Posterior cingulate gyrus (tissue), 11 donors: ENCODE measurements at regions of chr6 and their contacts with region 1.

Region 1: DNA sequence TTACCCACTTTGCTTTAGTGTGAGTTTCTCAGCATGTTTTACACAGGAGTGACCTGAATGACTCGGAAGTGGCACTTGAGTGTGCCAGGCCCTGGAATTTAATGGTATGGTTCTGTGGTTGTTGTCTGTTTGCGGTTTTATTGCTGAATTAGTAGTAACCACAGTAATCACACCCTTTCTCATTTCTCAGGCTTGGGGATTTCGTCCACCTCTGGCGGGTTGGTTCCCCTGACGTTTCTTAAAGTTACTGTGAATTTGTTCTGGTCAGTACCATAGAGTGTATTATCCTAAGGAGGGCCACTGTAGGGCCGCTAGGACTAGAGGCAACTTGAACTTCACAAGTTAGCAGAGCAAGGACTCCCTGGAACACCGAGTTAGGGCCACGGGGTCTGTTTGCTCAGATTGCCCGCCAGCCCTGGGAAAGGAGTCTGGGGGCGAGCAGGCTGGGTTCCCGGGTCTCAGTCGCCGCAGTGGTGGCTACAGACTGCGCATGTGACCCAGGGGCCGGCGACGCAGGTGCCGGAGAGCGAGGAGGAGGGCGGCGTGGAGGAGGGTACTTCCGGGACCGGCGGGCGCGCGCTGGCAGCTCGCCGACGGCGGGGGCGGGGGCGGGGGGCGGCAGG is 546 bp upstream of the KLHL32 start:
- DNase-seq: no peak

Region 2: DNA sequence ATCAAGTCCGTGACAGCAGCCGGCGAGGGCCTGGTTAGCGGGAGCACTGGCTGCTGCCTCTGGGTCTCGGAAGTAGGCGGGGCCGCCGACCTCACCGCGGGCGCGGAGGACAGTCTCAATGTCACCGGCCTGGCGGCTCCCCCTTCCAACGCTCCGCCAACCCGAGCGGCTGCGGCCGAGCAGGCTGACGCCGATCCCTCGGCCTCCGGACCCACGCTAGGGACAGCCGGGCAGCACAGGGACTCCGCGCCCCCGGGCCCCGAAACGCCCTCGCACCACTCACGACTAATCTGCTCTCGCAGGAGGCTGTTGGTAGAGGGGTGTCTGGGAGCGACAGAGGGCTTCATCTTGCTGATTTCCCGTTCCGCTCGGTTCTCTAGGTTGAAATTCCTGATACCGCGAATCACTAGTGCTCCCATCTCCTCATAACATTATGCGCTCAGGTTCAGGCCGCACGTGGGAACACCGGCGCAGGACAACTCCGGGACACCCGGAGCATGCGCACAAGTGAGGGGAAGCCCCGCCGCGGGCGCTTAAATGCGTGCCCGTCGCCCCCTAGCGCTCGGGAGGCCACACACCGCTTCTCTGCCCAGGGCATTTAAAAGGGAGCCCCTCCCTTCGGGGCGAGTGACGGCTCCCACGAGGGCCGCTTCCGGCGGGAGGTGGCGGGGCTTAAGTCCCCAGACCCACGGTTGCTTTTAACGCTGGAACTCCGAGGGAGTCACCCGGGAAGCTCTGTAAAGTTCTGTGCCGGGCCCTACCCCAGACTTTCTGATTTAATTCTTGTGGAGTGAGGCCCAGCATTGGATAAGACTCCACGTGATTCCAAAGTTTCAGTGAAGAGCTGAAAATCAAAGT is 26.4 kb before region 1 on chr6 and contains the start of gene NDUFAF4:
- intact Hi-C with region 1: loop called (anchors 2 kb)
- DNase-seq: peak; percentile 88 to 99 (median 94)

Region 3: GRCh38 chr6:96990462-96990861 is 66.5 kb after region 1 on chr6:
- intact Hi-C with region 1: loop called (anchors 5 kb)
- DNase-seq: peak in 8 of 10 donors; percentile 37 to 95 (median 59)

Region 4: DNA sequence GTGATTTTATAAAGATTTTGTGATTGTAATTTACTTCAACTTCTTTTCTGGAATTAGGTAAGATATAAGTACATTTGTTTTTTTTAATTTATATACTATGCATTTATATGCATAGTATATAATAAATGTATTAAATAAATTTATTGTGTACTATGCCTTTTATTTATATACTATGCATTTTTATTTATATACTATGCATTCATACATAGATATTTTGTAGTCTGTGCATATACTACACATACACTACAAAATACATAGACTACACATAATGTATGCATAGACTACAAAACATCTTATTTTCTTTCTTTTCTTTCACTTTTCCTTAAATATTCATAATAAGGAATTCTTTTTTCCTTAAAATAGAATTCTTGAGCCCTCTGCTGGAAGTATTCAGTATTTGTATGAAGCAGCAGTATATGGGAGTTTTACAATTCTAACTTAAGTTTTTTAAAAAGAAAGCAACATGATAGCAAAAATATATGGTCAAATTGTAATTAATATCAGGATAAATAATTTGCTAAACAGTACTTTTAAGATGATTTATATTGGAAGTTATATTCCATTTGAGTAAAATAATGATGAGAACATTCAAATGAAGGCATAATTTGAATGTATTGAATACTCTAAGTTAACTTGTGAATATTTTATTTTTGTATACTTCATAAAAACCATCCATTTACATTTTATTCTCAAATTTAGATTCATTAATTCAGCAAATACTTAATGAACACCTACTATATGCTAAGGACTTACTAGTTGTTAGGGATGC is 129.8 kb after region 1 on chr6:
- intact Hi-C with region 1: loop called (anchors 5 kb)
- DNase-seq: no peak